Mammary epithelial cell (primary cell): ENCODE measurements at regions of chr6 and their contacts with region 1.

Region 1: GRCh38 chr6:75065523-75065922 is 140.3 kb downstream of the COL12A1 start:
- DNase-seq: no peak
- H3K4me3 ChIP-seq: no peak overlapping the region
- H3K27ac ChIP-seq: no peak overlapping the region
- H3K4me1 ChIP-seq: no peaks in the 10 kb centered on the region
- H3K27me3 ChIP-seq: no peaks in the 10 kb centered on the region
- CTCF ChIP-seq: no peak

Region 2: DNA sequence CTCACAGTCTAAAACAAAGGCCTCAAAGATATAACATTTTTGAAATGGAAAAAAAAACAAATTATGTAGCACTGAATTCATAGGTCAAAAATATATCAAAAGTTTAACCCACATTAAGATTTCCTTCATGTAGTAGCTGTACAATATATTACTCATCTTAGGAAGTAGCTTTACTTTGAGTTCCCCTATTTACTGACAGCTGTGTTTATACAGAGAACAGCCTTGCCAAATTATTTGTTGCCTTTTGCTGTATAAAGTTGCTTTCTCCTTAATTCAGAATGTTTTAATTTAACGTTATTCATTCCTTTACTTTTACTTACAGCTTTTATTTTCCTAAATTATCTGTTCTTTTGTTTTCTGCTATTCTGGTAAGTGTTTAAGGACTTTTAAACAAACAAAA is 40.7 kb before region 1 on chr6:
- CTCF ChIA-PET with region 1: no interaction called
- dilution Hi-C with region 1: loop called (anchors 5 kb)
- in situ Hi-C with region 1: no loop called
- intact Hi-C with region 1: no loop called
- DNase-seq: no peak
- H3K4me3 ChIP-seq: no peak overlapping the region
- H3K27ac ChIP-seq: no peak overlapping the region
- H3K4me1 ChIP-seq: no peaks in the 10 kb centered on the region
- H3K27me3 ChIP-seq: no peaks in the 10 kb centered on the region
- CTCF ChIP-seq: no peak